ENCODE measurements at regions of chr2 and their contacts with region 1.

Region 1: DNA sequence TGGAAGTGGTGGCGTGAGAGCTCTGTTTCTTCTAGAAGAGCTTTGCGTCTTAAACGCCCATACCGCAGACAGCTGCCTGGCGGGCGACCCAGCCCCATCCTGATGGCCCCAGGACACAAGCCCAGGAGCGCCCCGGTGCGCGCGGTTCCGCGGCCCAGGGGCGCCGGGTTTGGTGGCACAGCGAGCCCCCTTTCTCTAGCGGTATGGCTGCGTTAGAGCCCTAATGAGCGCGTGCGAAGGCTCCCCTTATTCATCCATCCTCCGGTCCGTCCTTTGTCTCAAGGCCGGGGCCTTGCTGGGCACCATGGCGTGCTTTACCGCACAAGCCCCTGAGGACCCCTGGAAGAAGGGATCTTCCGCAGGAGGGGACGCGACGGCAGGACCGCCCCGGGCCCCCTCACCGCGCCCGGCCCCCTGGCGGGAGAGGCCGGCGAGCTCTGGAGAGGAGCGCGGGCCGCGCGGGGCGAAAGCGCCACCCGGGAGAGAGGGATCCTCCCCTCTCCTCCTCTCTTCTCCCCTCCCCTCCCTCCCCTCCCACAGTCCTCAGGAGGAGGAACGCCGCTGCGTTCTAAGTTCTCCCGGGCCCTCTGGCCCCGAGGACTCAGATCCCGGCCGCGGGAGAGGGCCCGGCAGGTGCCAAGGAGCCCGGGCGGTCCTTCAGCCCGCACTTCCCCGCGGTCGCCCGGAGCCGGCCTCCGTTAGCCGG is 626 bp upstream of the SLC1A4 start:
- DNase-seq: peak; percentile 75
- ATAC-seq: peak; percentile 77
- H3K4me3 ChIP-seq: peak overlapping the region; percentile 77 to 92 (median 83)
- H3K27ac ChIP-seq: peak overlapping the region; percentile 84
- H3K4me1 ChIP-seq: peaks cover 71% of the 10 kb centered on the region
- H3K27me3 ChIP-seq: no peaks in the 10 kb centered on the region; a peak in 1 of 5 replicates
- CTCF ChIP-seq: peak; percentile 64
- EP300 ChIP-seq: no peak; a peak in 1 of 4 replicates
- POLR2A ChIP-seq: peak; percentile 63 to 73
- RAD21 ChIP-seq: peak; percentile 77

Region 2: GRCh38 chr2:64914735-64915509 is 73.7 kb before region 1 on chr2:
- CTCF ChIA-PET with region 1: interaction called, 10 read pairs
- POLR2A ChIA-PET with region 1: interaction called, 9 read pairs
- in situ Hi-C with region 1: loop called (anchors 5 kb)
- intact Hi-C with region 1: loop called (anchors 1 kb)
- DNase-seq: no peak
- ATAC-seq: no peak
- H3K4me3 ChIP-seq: no peak overlapping the region
- H3K27ac ChIP-seq: no peak overlapping the region
- H3K4me1 ChIP-seq: peaks cover 6% of the 10 kb centered on the region; the same call in 1 of the 2 replicates
- H3K27me3 ChIP-seq: 0 out of 5 replicates have a peak, but pooled peaks cover 0 to 4% of the 10 kb centered on the region in 2 experiments
- CTCF ChIP-seq: no peak
- EP300 ChIP-seq: no peak
- POLR2A ChIP-seq: no peak
- RAD21 ChIP-seq: no peak

Region 3: GRCh38 chr2:64922482-64923384 is 65.8 kb before region 1 on chr2:
- CTCF ChIA-PET with region 1: interaction called, 10 read pairs
- POLR2A ChIA-PET with region 1: interaction called, 37 read pairs
- in situ Hi-C with region 1: loop called (anchors 5 kb)
- intact Hi-C with region 1: loop called (anchors 1 kb)
- DNase-seq: peak; percentile 88
- ATAC-seq: peak; percentile 81
- H3K4me3 ChIP-seq: peak overlapping the region; percentile 4 to 51 (median 37); a peak in 5 of 6 replicates
- H3K27ac ChIP-seq: peak overlapping the region; percentile 77
- H3K4me1 ChIP-seq: peaks cover 40% of the 10 kb centered on the region
- H3K27me3 ChIP-seq: no peaks in the 10 kb centered on the region
- CTCF ChIP-seq: peak; percentile 73
- EP300 ChIP-seq: peak in 1 of 2 experiments; percentile 73; a peak in 2 of 4 replicates
- POLR2A ChIP-seq: 0 out of 4 replicates have a peak, but pooled peaks of 1 of the 2 experiments have one; percentile 21
- RAD21 ChIP-seq: peak; percentile 48; the same call in 1 of the 2 replicates

Region 4: DNA sequence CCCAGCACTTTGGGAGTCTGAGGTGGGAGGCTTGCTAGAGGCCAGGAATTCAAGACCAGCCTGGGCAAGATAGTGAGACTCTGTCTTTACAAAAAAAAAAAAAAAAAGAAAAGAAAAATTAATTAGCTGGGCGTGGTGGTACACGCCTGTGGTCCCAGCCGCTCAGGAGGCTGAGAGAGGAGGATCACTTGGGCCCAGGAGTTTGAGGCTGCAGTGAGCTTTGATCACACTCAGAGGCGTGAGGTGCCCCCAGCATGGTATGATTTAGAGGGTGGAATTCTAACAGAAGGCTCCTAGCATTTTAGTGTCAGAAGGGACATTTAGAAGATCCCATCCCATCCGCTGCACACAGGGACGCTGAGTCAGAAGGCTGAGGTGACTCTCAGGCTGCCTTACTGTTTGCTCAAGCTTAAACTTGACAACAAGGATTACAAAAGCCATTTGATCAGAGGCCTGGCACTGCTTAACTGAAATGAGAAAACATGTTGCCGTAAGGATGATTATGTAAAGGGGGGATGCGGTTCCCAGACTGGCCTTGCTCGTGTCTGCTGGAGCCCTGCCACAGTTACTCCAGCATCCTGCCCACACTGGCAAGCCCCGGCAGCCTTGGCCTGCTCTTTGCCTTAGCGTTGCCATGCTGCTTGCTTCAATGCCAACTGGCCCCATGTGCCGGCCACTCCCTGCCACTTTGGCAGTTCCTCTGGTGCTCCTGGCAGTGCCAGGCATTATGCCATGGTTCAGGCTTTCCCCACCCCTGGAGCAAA is 45.0 kb before region 1 on chr2:
- CTCF ChIA-PET with region 1: no interaction called
- POLR2A ChIA-PET with region 1: interaction called, 4 read pairs
- in situ Hi-C with region 1: loop called (anchors 5 kb)
- intact Hi-C with region 1: loop called (anchors 2 kb)
- DNase-seq: peak; percentile 97
- ATAC-seq: peak; percentile 82
- H3K4me3 ChIP-seq: 0 out of 6 replicates have a peak overlapping the region, but pooled peaks of 1 of the 3 experiments have one; percentile 15
- H3K27ac ChIP-seq: no peak overlapping the region
- H3K4me1 ChIP-seq: peaks cover 73% of the 10 kb centered on the region
- H3K27me3 ChIP-seq: no peaks in the 10 kb centered on the region; a peak in 1 of 5 replicates
- CTCF ChIP-seq: no peak
- EP300 ChIP-seq: peak; percentile 52 to 94; a peak in 3 of 4 replicates
- POLR2A ChIP-seq: no peak
- RAD21 ChIP-seq: no peak

Region 5: DNA sequence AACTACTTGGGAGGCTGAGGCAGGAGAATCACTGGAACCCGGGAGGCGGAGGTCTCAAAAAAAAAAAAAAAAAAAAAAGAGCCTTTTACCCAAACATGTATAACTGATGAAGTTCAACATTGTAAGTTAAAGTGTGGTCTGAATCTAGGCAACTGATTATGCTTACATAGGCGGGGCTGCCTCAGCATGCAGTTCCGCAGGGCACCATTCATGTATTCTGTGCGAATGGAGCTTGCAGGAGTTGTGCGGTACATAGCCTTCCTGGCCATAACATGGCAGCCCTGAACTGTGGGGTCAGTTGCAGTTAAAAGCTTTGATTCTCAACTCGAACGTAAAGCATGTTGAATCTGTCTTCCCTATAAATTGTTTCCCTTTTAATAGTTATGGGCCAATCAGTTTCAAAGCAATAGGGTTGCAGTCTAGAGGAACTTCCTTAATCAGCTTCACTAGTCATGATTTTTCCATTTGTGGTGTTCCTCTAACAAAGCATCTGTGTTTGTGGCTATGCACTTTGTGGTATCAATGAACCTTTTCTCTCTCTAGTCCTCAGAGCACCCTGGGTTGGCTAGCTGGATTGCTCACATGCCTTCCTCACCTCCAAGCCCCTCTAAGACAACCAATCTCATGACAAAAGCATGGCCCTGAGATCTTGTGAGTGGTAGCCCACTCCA is 37.0 kb after region 1 on chr2:
- CTCF ChIA-PET with region 1: no interaction called
- POLR2A ChIA-PET with region 1: interaction called, 3 read pairs
- in situ Hi-C with region 1: no loop called
- intact Hi-C with region 1: loop called (anchors 5 kb)
- DNase-seq: peak; percentile 27
- ATAC-seq: peak; percentile 31; the same call in 2 of the 3 replicates
- H3K4me3 ChIP-seq: no peak overlapping the region
- H3K27ac ChIP-seq: peak overlapping the region; percentile 20
- H3K4me1 ChIP-seq: peaks cover 35% of the 10 kb centered on the region
- H3K27me3 ChIP-seq: no peaks in the 10 kb centered on the region
- CTCF ChIP-seq: no peak
- EP300 ChIP-seq: no peak
- POLR2A ChIP-seq: no peak
- RAD21 ChIP-seq: no peak

Region 6: DNA sequence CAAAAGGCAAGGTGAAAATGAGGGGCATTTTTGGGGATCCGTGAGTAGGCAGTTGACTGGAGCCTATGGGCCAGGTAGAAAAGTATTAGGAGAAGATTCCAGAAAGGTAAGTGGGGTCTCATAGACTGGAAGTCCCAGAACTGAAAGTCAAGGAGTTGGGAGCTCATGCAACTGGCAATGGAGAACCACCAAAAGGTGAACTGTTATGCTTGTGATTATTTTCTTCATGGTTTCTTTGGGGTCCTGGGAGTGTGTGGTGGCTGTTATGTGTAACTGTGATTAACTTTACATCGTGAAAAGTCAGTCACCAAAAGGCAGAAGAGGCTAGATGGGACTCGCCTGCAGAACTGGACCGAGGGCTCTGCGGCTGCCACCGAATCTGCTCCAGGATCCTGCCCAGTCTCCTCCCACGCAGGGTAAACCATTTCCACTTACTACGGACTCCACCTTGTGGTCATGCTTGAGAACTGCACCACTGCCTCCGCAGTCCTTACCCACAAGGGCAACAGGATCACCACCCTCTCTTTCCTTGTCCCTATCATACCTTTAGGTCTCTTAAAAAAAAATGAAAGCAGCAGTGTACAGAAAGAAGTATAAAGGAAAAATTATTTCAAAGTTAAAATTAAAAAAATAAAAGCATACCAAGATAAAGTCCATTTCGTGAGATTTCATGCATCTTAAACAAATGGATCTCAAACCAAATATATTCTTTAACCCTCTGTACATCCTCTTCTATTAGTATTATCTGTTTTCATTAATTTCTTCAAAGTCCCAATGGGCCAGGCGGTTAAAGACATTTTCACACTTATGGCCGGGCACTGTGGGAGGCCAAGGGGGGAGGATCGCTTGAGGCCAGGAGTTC is 52.1 kb after region 1 on chr2:
- CTCF ChIA-PET with region 1: no interaction called
- POLR2A ChIA-PET with region 1: no interaction called
- in situ Hi-C with region 1: no loop called
- intact Hi-C with region 1: loop called (anchors 5 kb)
- DNase-seq: peak; percentile 83
- ATAC-seq: peak; percentile 98
- H3K4me3 ChIP-seq: no peak overlapping the region
- H3K27ac ChIP-seq: no peak overlapping the region
- H3K4me1 ChIP-seq: peaks cover 13% of the 10 kb centered on the region
- H3K27me3 ChIP-seq: no peaks in the 10 kb centered on the region
- CTCF ChIP-seq: peak; percentile 97
- EP300 ChIP-seq: no peak
- POLR2A ChIP-seq: no peak
- RAD21 ChIP-seq: peak; percentile 92

Region 7: DNA sequence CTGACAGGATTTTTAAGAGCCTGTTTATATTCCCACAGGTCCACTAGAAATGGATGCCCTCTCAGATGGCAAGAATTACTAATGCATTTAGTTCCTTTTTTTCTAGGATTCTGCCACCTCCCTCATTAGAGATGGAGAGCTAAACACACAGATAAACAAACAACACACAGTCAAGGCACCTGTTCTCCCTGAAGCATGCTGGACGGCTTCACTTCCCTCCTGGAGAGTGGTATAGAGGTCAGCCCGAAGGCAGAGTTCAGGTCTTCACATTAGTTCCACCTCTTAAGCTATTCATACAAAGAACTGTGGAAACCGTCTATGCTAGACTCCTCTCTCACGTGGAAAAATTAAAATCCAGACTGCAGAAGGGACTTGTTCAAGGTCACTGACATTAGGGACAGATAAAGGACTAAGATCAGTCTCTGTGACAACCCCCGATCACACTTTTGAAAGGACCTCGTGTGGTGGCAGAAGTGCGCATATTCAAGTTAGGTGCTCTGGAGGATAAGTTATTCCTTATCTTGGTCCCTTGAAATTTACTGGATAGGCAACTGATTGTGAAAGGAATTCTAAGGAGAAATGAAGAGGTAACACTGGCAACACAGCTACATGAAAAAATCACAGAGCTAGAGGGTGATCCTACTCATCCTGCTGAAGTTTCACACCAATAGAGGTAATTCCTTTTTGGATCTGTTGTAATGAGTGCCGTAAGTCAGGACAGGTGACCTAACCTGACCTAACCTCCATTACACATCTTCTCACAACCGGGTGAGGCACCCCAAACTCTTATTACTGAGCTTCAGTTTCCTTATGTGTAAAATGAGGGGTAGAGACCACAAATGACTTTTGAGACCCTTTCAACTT is 368.8 kb after region 1 on chr2:
- CTCF ChIA-PET with region 1: no interaction called
- POLR2A ChIA-PET with region 1: no interaction called
- in situ Hi-C with region 1: no loop called
- intact Hi-C with region 1: no loop called
- DNase-seq: no peak
- ATAC-seq: peak; percentile 34; the same call in 2 of the 3 replicates
- H3K4me3 ChIP-seq: no peak overlapping the region
- H3K27ac ChIP-seq: peak overlapping the region; percentile 1
- H3K4me1 ChIP-seq: peaks cover 89% of the 10 kb centered on the region
- H3K27me3 ChIP-seq: no peaks in the 10 kb centered on the region
- CTCF ChIP-seq: no peak
- EP300 ChIP-seq: no peak
- POLR2A ChIP-seq: 0 out of 4 replicates have a peak, but pooled peaks of 1 of the 2 experiments have one; percentile 33
- RAD21 ChIP-seq: no peak

Region 8: GRCh38 chr2:65576861-65577601 is 588.5 kb after region 1 on chr2:
- CTCF ChIA-PET with region 1: no interaction called
- POLR2A ChIA-PET with region 1: no interaction called
- in situ Hi-C with region 1: no loop called
- intact Hi-C with region 1: loop called (anchors 10 kb)
- DNase-seq: peak; percentile 91
- ATAC-seq: peak; percentile 91
- H3K4me3 ChIP-seq: peak overlapping the region in 2 of 3 experiments; percentile 13 to 23; a peak in 1 of 6 replicates
- H3K27ac ChIP-seq: no peak overlapping the region
- H3K4me1 ChIP-seq: peaks cover 19% of the 10 kb centered on the region
- H3K27me3 ChIP-seq: no peaks in the 10 kb centered on the region
- CTCF ChIP-seq: no peak
- EP300 ChIP-seq: peak in 1 of 2 experiments; percentile 74; a peak in 1 of 4 replicates
- POLR2A ChIP-seq: no peak
- RAD21 ChIP-seq: no peak

Region 9: GRCh38 chr2:65662654-65663432 is 674.3 kb after region 1 on chr2:
- CTCF ChIA-PET with region 1: no interaction called
- POLR2A ChIA-PET with region 1: no interaction called
- in situ Hi-C with region 1: no loop called
- intact Hi-C with region 1: no loop called
- DNase-seq: no peak
- ATAC-seq: no peak
- H3K4me3 ChIP-seq: no peak overlapping the region
- H3K27ac ChIP-seq: no peak overlapping the region
- H3K4me1 ChIP-seq: peaks cover 8% of the 10 kb centered on the region
- H3K27me3 ChIP-seq: peaks cover 1 to 13% of the 10 kb centered on the region in 2 experiments; a peak in 2 of 5 replicates
- CTCF ChIP-seq: no peak
- EP300 ChIP-seq: no peak
- POLR2A ChIP-seq: no peak
- RAD21 ChIP-seq: no peak

Measured in HepG2 (cell line).